B cell (primary cell): ENCODE measurements at regions of chr1 and their contacts with region 1.

Region 1: GRCh38 chr1:213051127-213051880 is at the start of gene RPS6KC1:
- DNase-seq: peak; percentile 86
- ATAC-seq: peak; percentile 95
- H3K4me3 ChIP-seq: peak within 1 kb of the TSS; percentile 77 to 87 (median 82)
- H3K4me3 Mint-ChIP-seq: peak within 1 kb of the TSS; percentile 97
- H3K27ac ChIP-seq: peak within 1 kb of the TSS; percentile 69 to 71
- H3K27ac Mint-ChIP-seq: peak within 1 kb of the TSS; percentile 86
- H3K4me1 ChIP-seq: peaks cover 12 to 13% of the 10 kb centered on the region in 2 donors
- H3K4me1 Mint-ChIP-seq: peaks cover 22% of the 10 kb centered on the region
- H3K27me3 ChIP-seq: peaks cover 0 to 6% (median under 1%) of the 10 kb centered on the region in 4 experiments
- H3K27me3 Mint-ChIP-seq: peaks cover 18% of the 10 kb centered on the region
- CTCF ChIP-seq: no peak
- total RNA-seq, gene RPS6KC1: 19.0 and 19.8 TPM in 2 replicates

Region 2: DNA sequence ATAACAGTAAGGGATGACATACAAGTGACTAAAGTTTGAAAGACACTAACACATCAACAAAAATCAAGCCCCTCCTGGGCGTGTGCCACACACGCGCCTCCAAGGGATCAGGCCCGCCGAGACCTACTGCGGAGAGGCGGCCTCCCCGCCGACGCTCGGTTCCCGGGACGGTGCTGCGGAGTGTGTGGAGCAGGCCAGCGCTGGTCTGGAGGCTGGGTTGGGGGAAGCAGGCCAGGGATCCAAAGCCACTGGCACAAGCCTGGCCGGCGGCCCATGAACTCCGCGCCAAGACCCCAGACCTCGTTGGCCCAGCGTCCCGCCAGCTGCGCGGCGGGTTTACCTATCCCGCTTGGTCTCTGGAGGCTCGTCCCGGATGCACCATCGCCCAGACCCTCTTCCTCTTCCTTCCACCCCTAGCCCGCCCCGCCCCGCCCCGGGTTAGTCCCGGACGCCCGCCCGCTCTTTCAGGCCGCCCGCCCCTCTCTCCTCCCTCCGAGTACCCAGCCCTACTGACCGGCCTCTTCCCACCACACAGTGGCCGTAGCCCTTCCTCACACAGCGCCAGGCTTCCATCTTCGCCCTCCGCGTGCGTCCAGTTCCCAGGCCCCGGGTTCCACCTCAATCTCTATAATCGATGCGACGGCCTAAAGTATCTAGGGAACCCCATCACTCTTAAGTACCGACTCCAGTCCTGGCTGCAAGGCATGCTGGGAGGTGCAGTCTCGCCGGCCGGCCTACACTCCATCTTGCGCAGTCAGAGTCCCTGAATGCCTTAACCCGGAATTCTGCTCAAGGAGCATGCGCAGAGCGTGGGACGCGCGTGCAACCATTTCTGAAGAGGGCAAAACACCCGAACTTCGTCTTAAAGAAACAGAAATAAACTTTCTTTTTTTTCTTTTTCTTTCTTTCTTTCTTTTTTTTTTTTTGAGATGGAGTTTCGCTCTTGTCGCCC is 35.9 kb before region 1 on chr1 and contains the start of gene ANGEL2:
- CTCF ChIA-PET with region 1: interaction called, 3 read pairs
- POLR2A ChIA-PET with region 1: interaction called, 7 read pairs
- intact Hi-C with region 1: loop called (anchors 1 kb)
- DNase-seq: peak; percentile 97
- ATAC-seq: peak; percentile 96
- H3K4me3 ChIP-seq: peak within 1 kb of the TSS; percentile 65 to 89 (median 77)
- H3K4me3 Mint-ChIP-seq: peak within 1 kb of the TSS; percentile 98
- H3K27ac ChIP-seq: peak within 1 kb of the TSS; percentile 81 to 92
- H3K27ac Mint-ChIP-seq: peak within 1 kb of the TSS; percentile 99
- H3K4me1 ChIP-seq: peaks cover 7 to 14% of the 10 kb centered on the region in 2 donors
- H3K4me1 Mint-ChIP-seq: peaks cover 31% of the 10 kb centered on the region
- H3K27me3 ChIP-seq: no peaks in the 10 kb centered on the region
- H3K27me3 Mint-ChIP-seq: no peaks in the 10 kb centered on the region
- CTCF ChIP-seq: no peak
- total RNA-seq, gene ANGEL2: 86.0 and 94.2 TPM in 2 replicates

Region 3: GRCh38 chr1:213274140-213274539 is 222.8 kb after region 1 on chr1:
- CTCF ChIA-PET with region 1: no interaction called
- POLR2A ChIA-PET with region 1: no interaction called
- intact Hi-C with region 1: no loop called
- DNase-seq: no peak
- ATAC-seq: no peak
- H3K4me3 ChIP-seq: no peak overlapping the region
- H3K4me3 Mint-ChIP-seq: no peak overlapping the region
- H3K27ac ChIP-seq: no peak overlapping the region
- H3K27ac Mint-ChIP-seq: no peak overlapping the region
- H3K4me1 ChIP-seq: no peaks in the 10 kb centered on the region
- H3K4me1 Mint-ChIP-seq: no peaks in the 10 kb centered on the region
- H3K27me3 ChIP-seq: no peaks in the 10 kb centered on the region
- H3K27me3 Mint-ChIP-seq: no peaks in the 10 kb centered on the region
- CTCF ChIP-seq: no peak